ENCODE measurements at regions of chr22 and their contacts with region 1.

Region 1: DNA sequence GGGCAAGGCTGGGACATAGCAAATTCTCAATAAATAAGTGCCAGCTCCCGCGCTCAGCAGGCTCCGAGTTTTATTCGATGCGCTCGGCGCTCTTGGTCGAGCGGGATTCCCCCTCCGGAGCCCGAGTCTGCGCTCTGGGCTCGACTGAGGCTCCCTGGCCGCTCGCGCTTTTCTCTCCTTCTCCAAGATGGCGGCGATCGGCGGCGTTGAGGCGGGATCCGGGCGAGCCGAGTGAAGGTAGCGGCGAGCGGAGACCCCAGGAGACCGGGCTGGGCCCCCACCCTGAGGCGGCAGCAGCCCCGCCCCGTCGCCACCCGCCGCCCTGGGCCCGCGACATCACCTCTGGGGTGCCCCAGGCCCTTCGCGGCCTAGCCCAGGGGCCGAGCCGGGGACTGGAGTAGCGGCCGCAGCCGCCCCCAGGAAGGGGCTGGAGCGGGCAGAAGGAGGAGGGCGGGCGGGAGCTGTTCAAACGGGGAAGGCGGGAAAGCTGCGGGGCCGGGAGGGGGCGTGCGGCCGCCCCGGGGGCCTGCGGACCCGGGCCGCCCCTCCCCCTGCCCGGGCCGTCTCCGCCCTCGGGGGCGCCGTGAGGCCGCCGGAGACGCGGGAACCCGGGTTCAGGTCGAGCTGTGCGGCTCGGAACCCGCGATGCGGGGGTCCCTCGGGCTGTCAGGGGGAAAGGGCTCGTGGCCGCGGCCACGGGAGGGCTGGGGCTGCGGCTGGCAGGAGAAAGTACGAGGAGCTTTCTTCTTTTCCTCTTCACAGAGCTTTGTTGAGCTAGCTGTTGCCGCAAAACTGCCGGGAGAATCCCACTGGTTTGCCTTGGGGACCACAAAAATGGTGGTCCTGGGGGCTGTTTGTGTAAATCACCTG is at the start of gene HMGXB4:
- DNase-seq: peak; percentile 90
- ATAC-seq: peak; percentile 95
- H3K4me3 Mint-ChIP-seq: peak within 1 kb of the TSS; percentile 92
- H3K27ac Mint-ChIP-seq: peak within 1 kb of the TSS; percentile 94
- H3K4me1 Mint-ChIP-seq: peaks cover 23% of the 10 kb centered on the region
- H3K27me3 Mint-ChIP-seq: no peaks in the 10 kb centered on the region
- CTCF ChIP-seq: no peak
- total RNA-seq, gene HMGXB4: 33.7 to 38.2 TPM

Region 2: DNA sequence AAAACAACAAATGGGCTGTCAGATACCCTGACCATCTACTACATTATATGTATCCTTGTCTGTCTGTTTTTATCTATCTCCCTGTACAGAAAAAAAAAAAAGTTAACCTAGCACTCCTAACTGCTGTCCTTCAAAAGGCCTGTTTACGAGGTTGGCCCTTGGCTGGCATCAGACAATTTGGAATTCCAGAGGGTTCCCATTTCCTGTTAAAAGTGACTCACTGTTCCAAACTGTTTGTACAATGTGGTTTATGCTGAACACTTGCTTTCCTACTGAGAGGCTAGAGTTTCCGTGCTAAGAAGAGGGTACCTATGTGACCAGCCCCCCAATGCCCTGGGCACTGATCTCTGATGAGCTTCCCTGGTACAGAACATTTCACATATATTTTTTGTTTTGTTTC is 66.1 kb before region 1 on chr22:
- CTCF ChIA-PET with region 1: no interaction called
- POLR2A ChIA-PET with region 1: no interaction called
- intact Hi-C with region 1: no loop called
- DNase-seq: no peak
- ATAC-seq: no peak
- H3K4me3 Mint-ChIP-seq: no peak overlapping the region
- H3K27ac Mint-ChIP-seq: no peak overlapping the region
- H3K4me1 Mint-ChIP-seq: no peaks in the 10 kb centered on the region
- H3K27me3 Mint-ChIP-seq: peaks cover 3% of the 10 kb centered on the region
- CTCF ChIP-seq: no peak

Region 3: GRCh38 chr22:35231585-35232084 is 25.9 kb before region 1 on chr22:
- CTCF ChIA-PET with region 1: interaction called, 12 read pairs
- POLR2A ChIA-PET with region 1: interaction called, 4 read pairs
- intact Hi-C with region 1: no loop called
- DNase-seq: peak; percentile 88
- ATAC-seq: peak; percentile 84
- H3K4me3 Mint-ChIP-seq: no peak overlapping the region
- H3K27ac Mint-ChIP-seq: no peak overlapping the region
- H3K4me1 Mint-ChIP-seq: no peaks in the 10 kb centered on the region
- H3K27me3 Mint-ChIP-seq: peaks cover 21% of the 10 kb centered on the region
- CTCF ChIP-seq: peak; percentile 95

Region 4: DNA sequence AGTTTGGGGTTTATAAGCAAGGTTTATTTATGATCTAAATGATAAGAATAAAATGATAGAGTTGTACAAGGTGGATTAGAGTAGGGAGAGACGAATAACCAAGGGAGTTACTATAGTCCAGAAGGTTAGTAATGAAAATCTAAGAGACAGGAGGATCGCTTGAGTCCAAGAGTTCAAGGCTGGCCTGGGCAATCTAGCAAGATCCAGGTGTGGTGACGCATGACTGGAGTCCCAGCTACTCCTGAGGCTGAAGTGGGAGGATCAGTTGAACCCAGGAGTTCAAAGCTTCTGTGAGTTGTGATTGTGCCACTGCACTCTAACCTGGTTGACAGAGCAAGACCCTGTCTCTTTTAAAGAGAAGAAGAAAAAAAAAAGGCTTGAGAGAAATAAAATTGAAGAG is 12.1 kb after region 1 on chr22:
- CTCF ChIA-PET with region 1: interaction called, 3 read pairs
- POLR2A ChIA-PET with region 1: interaction called, 15 read pairs
- intact Hi-C with region 1: no loop called
- DNase-seq: no peak
- ATAC-seq: no peak
- H3K4me3 Mint-ChIP-seq: no peak overlapping the region
- H3K27ac Mint-ChIP-seq: no peak overlapping the region
- H3K4me1 Mint-ChIP-seq: peaks cover 27% of the 10 kb centered on the region
- H3K27me3 Mint-ChIP-seq: no peaks in the 10 kb centered on the region
- CTCF ChIP-seq: no peak

Region 5: GRCh38 chr22:35299673-35300497 is 42.3 kb after region 1 on chr22 and contains the start of gene TOM1:
- CTCF ChIA-PET with region 1: interaction called, 5 read pairs
- POLR2A ChIA-PET with region 1: interaction called, 15 read pairs
- intact Hi-C with region 1: no loop called
- DNase-seq: peak; percentile 97
- ATAC-seq: peak; percentile 96
- H3K4me3 Mint-ChIP-seq: peak within 1 kb of the TSS; percentile 82
- H3K27ac Mint-ChIP-seq: peak within 1 kb of the TSS; percentile 85
- H3K4me1 Mint-ChIP-seq: peaks cover 26% of the 10 kb centered on the region
- H3K27me3 Mint-ChIP-seq: no peaks in the 10 kb centered on the region
- CTCF ChIP-seq: no peak
- total RNA-seq, gene TOM1: 16.2 to 20.0 TPM

Region 6: GRCh38 chr22:35350539-35351503 is 93.3 kb after region 1 on chr22:
- CTCF ChIA-PET with region 1: no interaction called
- POLR2A ChIA-PET with region 1: no interaction called
- intact Hi-C with region 1: no loop called
- DNase-seq: peak; percentile 90
- ATAC-seq: peak; percentile 91
- H3K4me3 Mint-ChIP-seq: peak overlapping the region; percentile 78
- H3K27ac Mint-ChIP-seq: peak overlapping the region; percentile 60
- H3K4me1 Mint-ChIP-seq: peaks cover 26% of the 10 kb centered on the region
- H3K27me3 Mint-ChIP-seq: peaks cover 12% of the 10 kb centered on the region
- CTCF ChIP-seq: peak; percentile 91

Region 7: DNA sequence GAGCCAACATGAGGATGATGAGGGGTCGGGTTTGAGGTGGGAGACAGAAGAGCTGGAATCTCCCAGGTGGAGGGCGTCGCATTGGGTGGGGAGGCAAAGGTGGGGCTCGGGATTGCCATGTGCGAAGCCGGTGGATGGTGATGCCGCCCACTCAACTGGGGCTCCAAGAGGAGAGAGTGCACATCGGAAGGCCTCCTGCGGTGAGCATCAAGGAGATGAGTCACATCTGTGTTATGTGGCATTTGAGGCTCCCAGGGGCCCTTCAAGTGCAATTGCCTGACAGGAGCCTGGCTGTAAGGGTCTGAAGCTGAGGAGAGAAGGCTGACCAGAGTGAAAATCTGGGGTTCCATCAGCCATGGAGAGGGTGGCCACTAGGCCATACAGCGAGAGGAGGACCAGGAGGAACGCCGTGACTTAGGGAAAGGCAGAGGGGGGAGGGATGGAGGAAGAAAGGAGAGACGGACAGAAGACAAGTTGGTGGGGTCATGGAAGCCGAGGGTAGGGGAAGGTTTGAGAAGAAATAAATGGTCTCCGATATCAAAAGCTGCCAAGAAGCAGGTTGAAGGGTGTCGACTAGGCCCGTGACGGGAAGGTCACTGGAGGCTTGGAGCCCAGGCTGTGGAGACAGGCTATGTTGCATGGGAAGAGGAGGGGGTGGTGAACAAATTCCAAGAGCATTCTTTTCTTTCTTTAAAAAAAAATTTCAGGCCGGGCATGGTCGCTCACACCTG is 304.4 kb after region 1 on chr22:
- CTCF ChIA-PET with region 1: no interaction called
- POLR2A ChIA-PET with region 1: no interaction called
- intact Hi-C with region 1: no loop called
- DNase-seq: peak; percentile 44
- ATAC-seq: peak; percentile 53
- H3K4me3 Mint-ChIP-seq: no peak overlapping the region
- H3K27ac Mint-ChIP-seq: no peak overlapping the region
- H3K4me1 Mint-ChIP-seq: peaks cover 7% of the 10 kb centered on the region
- H3K27me3 Mint-ChIP-seq: peaks cover 12% of the 10 kb centered on the region
- CTCF ChIP-seq: no peak

Measured in activated CD8-positive, alpha-beta T cell treated with anti-CD3 and anti-CD28 coated beads for 36 hours (primary cell).